ENCODE measurements at regions of chr9 and their contacts with region 1.

Region 1: DNA sequence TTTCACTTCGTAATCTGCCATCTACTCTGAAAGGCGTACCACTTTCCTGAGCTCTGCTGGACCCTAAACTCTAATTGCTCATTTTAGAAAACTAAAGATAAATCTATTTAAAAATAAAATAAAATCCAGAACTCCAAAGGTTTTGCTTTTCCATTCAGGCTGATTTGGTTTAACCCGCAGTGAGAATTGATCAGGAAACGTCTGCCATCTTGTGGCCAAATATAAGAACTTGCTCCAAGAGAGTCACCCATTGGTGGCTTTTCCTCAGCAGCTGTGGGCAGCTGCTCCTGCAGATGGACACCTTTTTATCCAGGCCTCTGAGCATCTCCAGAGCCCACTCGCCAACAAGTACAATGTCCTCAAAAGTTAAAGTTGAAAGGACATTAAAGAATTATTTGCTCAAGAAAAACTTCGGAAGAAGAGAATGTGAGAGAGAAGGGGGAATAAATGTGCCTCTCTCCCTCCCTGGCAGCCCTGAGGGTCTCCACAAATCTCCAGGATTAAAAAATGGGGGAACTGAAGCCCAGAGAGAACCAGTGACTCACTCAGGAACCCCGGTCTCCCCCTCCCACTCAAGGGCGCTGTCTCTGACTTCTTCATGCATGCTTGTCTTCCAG is 4.1 kb downstream of the SAXO1 start:
- DNase-seq: no peak
- H3K4me3 ChIP-seq: no peak overlapping the region
- H3K27ac ChIP-seq: no peak overlapping the region
- H3K4me1 ChIP-seq: no peaks in the 10 kb centered on the region
- H3K27me3 ChIP-seq: peaks cover 0 to 4% (median 0%) of the 10 kb centered on the region in 4 donors
- CTCF ChIP-seq: peak; percentile 77 to 80 (median 78)
- EP300 ChIP-seq: no peak
- POLR2A ChIP-seq: no peak

Region 2: DNA sequence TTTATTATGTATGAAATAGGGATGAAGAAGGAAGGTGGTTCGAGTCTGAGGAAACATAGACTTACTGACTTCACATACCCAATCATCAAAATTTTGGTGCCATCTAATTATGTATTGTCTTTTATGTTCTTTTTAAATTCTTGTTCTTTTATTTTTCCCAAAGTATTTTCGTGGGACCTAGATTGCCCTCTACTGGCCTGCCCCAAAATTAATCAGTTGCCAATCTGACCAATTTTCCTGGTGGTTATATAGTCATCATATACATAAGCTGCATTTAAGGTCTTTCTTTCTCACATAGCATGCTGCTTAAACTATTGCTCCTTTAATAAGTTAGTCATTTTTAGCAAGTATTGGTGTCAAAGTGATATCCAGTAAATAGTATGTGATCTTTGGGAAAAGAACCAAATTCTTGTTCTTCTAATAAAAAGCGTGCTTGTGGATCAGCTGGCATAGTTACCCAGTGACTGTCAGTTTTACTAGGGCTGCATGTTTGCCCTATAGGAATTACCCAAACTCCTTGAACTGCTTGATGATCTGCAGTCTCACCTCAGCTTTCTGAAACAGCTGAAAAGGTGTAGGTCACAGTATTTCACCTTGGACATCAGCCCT is 1226.6 kb before region 1 on chr9:
- intact Hi-C with region 1: loop called (anchors 10 kb)
- DNase-seq: peak; percentile 57
- H3K4me3 ChIP-seq: no peak overlapping the region
- H3K27ac ChIP-seq: no peak overlapping the region
- H3K4me1 ChIP-seq: no peaks in the 10 kb centered on the region
- H3K27me3 ChIP-seq: no peaks in the 10 kb centered on the region
- CTCF ChIP-seq: peak; percentile 46 to 57 (median 52)
- EP300 ChIP-seq: no peak
- POLR2A ChIP-seq: no peak

Region 3: GRCh38 chr9:18947772-18948391 is 81.1 kb before region 1 on chr9:
- intact Hi-C with region 1: no loop called
- DNase-seq: no peak
- H3K4me3 ChIP-seq: no peak overlapping the region
- H3K27ac ChIP-seq: no peak overlapping the region
- H3K4me1 ChIP-seq: no peaks in the 10 kb centered on the region
- H3K27me3 ChIP-seq: no peaks in the 10 kb centered on the region
- CTCF ChIP-seq: no peak
- EP300 ChIP-seq: no peak
- POLR2A ChIP-seq: no peak

Region 4: GRCh38 chr9:19085295-19085694 is 56.4 kb after region 1 on chr9:
- intact Hi-C with region 1: no loop called
- DNase-seq: no peak
- H3K4me3 ChIP-seq: no peak overlapping the region
- H3K27ac ChIP-seq: no peak overlapping the region
- H3K4me1 ChIP-seq: no peaks in the 10 kb centered on the region
- H3K27me3 ChIP-seq: no peaks in the 10 kb centered on the region
- CTCF ChIP-seq: peak in 1 of 3 experiments; percentile 22
- EP300 ChIP-seq: no peak
- POLR2A ChIP-seq: no peak

Region 5: GRCh38 chr9:19313573-19313972 is 284.6 kb after region 1 on chr9:
- intact Hi-C with region 1: no loop called
- DNase-seq: no peak
- H3K4me3 ChIP-seq: no peak overlapping the region
- H3K27ac ChIP-seq: no peak overlapping the region
- H3K4me1 ChIP-seq: no peaks in the 10 kb centered on the region
- H3K27me3 ChIP-seq: no peaks in the 10 kb centered on the region
- CTCF ChIP-seq: no peak
- EP300 ChIP-seq: no peak
- POLR2A ChIP-seq: no peak

Measured in esophagus muscularis mucosa (tissue), 4 donors.